ENCODE measurements at regions of chr19 and their contacts with region 1.

Region 1: GRCh38 chr19:17215125-17215971 is at the start of gene USE1:
- DNase-seq: peak; percentile 87
- ATAC-seq: peak; percentile 90
- H3K4me3 Mint-ChIP-seq: peak within 1 kb of the TSS; percentile 89
- H3K27ac Mint-ChIP-seq: peak within 1 kb of the TSS; percentile 98
- H3K4me1 Mint-ChIP-seq: peaks cover 10% of the 10 kb centered on the region
- H3K27me3 Mint-ChIP-seq: no peaks in the 10 kb centered on the region
- CTCF ChIP-seq: no peak
- total RNA-seq, gene USE1: 13.9 to 15.4 TPM (median 14.2 TPM) in 3 replicates

Region 2: DNA sequence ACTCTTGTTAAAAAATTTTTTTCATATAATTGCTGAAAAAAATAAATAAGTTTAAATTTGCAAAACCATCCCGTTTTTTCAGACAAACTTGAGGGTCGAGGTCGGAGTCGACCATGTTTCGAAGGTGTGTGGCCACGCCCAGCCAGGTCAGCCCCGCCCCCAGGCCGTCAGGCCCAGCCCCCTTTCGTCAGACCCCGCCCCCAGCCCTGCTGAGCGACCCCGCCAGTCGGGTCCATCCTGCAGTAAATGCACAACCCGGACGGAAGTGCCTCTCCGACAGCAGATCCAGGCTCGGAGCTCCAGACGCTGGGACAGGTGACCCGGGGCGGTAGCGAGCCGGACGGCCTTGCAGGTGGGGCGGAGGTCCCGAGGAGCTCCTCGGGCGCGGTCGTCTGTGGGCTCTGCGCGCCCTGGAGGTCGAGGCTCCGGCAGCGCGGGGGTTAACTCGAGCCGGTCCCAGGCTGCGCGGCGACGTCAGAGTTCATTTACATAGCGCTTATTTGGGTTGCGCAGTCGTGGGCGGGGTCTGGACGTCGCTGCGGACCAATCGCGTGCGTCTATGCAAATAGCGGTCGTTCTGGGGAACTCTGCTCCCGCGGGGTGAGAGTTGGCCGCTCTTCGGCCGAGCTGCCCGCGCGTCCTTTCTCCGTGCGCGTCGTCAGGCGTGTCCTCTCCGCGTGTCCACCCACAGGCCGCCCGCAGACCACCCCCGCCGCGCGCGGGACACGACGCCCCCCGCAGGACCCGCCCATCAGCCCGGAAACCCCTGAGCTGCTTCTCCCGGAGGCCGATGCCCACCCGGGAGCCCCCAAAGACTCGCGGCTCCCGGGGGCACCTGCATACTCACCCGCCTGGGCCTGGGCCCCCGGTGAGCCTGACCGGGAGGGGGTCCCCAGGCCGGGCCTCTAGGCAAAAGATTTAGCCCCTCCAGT is 10.9 kb after region 1 on chr19 and contains the start of gene OCEL1:
- CTCF ChIA-PET with region 1: interaction called, 7 read pairs
- POLR2A ChIA-PET with region 1: interaction called, 15 read pairs
- DNase-seq: peak; percentile 98
- ATAC-seq: peak; percentile 92
- H3K4me3 Mint-ChIP-seq: peak within 1 kb of the TSS; percentile 89
- H3K27ac Mint-ChIP-seq: peak within 1 kb of the TSS; percentile 100
- H3K4me1 Mint-ChIP-seq: peaks cover 15% of the 10 kb centered on the region
- H3K27me3 Mint-ChIP-seq: peaks cover 2% of the 10 kb centered on the region; the same call in 1 of the 2 replicates
- CTCF ChIP-seq: no peak
- total RNA-seq, gene OCEL1: 34.0 to 51.6 TPM (median 40.9 TPM) in 3 replicates

Region 3: DNA sequence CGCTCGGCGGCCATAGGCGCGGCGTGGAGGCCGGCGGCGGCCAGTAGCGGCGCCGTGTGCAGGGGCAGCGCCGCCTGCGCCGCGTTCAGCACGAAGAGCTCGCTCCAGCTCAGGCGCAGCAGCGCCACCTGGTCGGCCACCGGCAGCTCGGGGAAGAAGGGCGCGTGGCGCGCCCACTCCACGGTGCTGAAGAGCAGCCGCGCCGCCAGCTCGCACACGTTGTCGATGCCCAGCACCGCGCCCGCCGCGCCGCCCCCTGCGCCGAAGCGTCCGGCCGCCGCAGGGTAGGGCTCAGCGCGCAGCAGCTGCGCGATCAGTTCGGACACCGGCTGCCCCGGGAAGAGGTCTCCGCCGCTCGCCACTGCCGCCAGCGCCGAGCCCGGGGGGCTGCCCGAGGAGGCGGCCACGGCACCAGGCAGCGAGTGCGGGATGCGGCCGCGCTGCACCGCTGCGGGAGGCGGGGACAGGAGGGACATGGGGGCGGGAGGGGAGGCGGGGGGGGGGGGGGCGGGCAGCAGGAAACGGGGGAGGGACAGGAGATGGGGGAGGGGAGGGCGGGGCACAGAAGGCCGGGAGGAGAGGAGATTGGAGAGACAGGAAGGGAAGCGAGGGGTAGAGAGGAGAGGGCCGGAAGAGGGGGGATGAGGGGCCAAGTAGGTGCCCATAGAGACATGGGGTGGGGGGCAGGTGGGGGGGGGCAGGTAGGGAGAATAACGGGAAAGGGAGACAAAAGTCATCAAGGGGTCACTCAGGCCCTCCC is 20.4 kb after region 1 on chr19:
- CTCF ChIA-PET with region 1: interaction called, 12 read pairs
- POLR2A ChIA-PET with region 1: interaction called, 6 read pairs
- DNase-seq: peak; percentile 68
- ATAC-seq: peak; percentile 33
- H3K4me3 Mint-ChIP-seq: peak overlapping the region; percentile 80
- H3K27ac Mint-ChIP-seq: no peak overlapping the region
- H3K4me1 Mint-ChIP-seq: peaks cover 30% of the 10 kb centered on the region
- H3K27me3 Mint-ChIP-seq: no peaks in the 10 kb centered on the region
- CTCF ChIP-seq: no peak

Region 4: DNA sequence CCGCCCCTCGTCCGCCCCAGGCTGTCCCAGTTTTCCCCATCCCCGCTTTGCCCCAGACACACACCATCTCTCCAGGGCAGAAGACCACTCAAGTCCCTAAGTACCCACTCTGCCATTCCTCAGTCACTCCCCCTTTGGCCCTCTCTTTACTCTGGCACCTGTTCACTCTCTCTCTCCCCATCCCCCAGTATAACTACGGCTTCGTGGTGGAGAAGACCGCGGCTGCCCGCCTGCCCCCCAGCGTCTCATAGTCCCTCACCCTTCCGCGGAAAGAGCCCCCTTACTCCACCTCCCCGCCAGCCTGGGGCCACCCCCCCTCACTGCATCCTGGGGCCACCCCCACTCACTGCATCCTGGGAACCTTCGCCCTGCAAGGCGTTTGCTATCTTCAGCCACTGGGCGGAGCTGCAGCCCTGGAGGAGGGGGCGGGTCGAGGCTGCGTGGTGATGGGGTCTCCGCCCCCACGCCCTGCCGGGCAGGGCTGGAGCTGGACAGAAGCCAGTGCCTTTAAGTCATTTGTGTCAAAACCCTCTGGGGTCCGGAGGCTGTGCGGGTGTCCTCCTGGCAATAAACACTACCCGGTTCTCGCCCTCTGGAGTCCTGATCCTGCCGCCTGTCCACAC is 209.5 kb after region 1 on chr19:
- CTCF ChIA-PET with region 1: no interaction called
- POLR2A ChIA-PET with region 1: no interaction called
- DNase-seq: peak; percentile 92
- ATAC-seq: peak; percentile 93
- H3K4me3 Mint-ChIP-seq: peak overlapping the region; percentile 67
- H3K27ac Mint-ChIP-seq: no peak overlapping the region
- H3K4me1 Mint-ChIP-seq: peaks cover 17% of the 10 kb centered on the region
- H3K27me3 Mint-ChIP-seq: no peaks in the 10 kb centered on the region
- CTCF ChIP-seq: peak; percentile 51